A549 (cell line): ENCODE measurements at regions of chr2 and their contacts with region 1.

Region 1: GRCh38 chr2:60581433-60582282 is 28.2 kb upstream of the BCL11A start:
- DNase-seq: peak; percentile 58 to 76
- ATAC-seq: peak; percentile 87 to 95
- H3K4me3 ChIP-seq: peak overlapping the region; percentile 35
- H3K27ac ChIP-seq: peak overlapping the region in 1 of 2 experiments; percentile 65; a peak in 3 of 6 replicates
- H3K4me1 ChIP-seq: no peaks in the 10 kb centered on the region
- CTCF ChIP-seq: peak; percentile 98
- EP300 ChIP-seq: no peak
- POLR2A ChIP-seq: no peak
- RAD21 ChIP-seq: peak; percentile 88 to 98

Region 2: GRCh38 chr2:59025157-59025757 is 1556.4 kb before region 1 on chr2:
- CTCF ChIA-PET with region 1: interaction called, 10 read pairs
- POLR2A ChIA-PET with region 1: no interaction called
- DNase-seq: peak in 1 of 2 experiments; percentile 34
- ATAC-seq: peak; percentile 56 to 90; a peak in 3 of 6 replicates
- H3K4me3 ChIP-seq: no peak overlapping the region
- H3K27ac ChIP-seq: no peak overlapping the region
- H3K4me1 ChIP-seq: no peaks in the 10 kb centered on the region
- CTCF ChIP-seq: peak; percentile 65
- EP300 ChIP-seq: no peak
- POLR2A ChIP-seq: no peak
- RAD21 ChIP-seq: peak; percentile 48 to 68; a peak in 4 of 5 replicates

Region 3: GRCh38 chr2:60406192-60406591 is 175.5 kb before region 1 on chr2:
- CTCF ChIA-PET with region 1: no interaction called
- POLR2A ChIA-PET with region 1: no interaction called
- DNase-seq: no peak
- ATAC-seq: no peak
- H3K4me3 ChIP-seq: no peak overlapping the region
- H3K27ac ChIP-seq: no peak overlapping the region
- H3K4me1 ChIP-seq: no peaks in the 10 kb centered on the region
- CTCF ChIP-seq: no peak
- EP300 ChIP-seq: no peak
- POLR2A ChIP-seq: no peak
- RAD21 ChIP-seq: no peak

Region 4: GRCh38 chr2:60550178-60550983 is 31.3 kb before region 1 on chr2:
- CTCF ChIA-PET with region 1: interaction called, 12 read pairs
- POLR2A ChIA-PET with region 1: no interaction called
- DNase-seq: peak; percentile 65 to 75
- ATAC-seq: peak; percentile 45 to 74
- H3K4me3 ChIP-seq: peak overlapping the region; percentile 63
- H3K27ac ChIP-seq: no peak overlapping the region
- H3K4me1 ChIP-seq: peaks cover 32% of the 10 kb centered on the region
- CTCF ChIP-seq: peak; percentile 82
- EP300 ChIP-seq: no peak
- POLR2A ChIP-seq: no peak
- RAD21 ChIP-seq: peak; percentile 91 to 94

Region 5: DNA sequence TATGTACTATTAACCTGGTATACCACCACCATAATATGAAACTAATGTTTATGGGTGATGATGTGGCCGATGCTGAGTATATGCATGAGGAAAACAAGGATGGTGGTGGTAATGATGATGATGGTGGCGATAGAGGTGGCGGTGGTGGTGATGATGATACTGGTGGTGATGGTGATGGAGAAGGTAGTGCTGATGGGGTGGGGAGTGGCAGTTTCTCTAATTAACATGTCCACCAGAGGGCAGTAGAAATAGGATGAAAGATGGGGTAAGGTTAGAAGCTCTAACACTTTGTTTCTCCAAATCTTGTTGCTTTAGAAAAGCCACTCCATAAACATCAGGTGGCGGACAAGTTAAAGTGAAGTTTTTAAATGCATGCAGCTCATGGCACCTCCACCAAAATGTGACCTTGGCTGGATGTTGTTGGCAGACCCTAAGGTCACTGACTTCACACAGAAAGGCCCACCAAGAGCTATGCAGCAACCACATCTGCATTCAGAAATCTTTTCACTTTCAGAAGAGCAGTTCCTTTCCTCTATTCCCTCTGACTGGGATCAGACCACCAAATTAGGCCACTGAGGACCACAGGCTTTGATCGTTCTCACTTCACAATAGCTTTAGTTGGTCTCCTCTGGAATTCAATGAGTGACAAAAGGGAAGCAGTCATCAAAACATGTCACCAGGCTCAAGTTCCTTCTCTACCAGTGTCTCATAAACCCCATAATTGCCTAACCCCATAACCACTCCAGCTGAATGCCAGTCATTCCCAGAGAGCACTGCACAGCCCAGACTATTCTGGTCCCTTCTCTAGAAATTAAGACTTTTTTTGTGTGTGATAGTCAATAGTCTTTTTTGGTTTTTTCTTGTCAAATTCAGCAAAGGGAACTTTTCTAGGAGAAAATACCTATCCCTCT is 20.7 kb before region 1 on chr2:
- CTCF ChIA-PET with region 1: interaction called, 69 read pairs
- POLR2A ChIA-PET with region 1: no interaction called
- DNase-seq: peak in 1 of 2 experiments; percentile 31
- ATAC-seq: peak; percentile 72 to 92
- H3K4me3 ChIP-seq: no peak overlapping the region
- H3K27ac ChIP-seq: no peak overlapping the region
- H3K4me1 ChIP-seq: 0 out of 3 replicates have a peak, but pooled peaks cover 7% of the 10 kb centered on the region
- CTCF ChIP-seq: peak; percentile 64
- EP300 ChIP-seq: no peak
- POLR2A ChIP-seq: no peak
- RAD21 ChIP-seq: 0 out of 5 replicates have a peak, but pooled peaks have one; percentile 18 to 28

Region 6: DNA sequence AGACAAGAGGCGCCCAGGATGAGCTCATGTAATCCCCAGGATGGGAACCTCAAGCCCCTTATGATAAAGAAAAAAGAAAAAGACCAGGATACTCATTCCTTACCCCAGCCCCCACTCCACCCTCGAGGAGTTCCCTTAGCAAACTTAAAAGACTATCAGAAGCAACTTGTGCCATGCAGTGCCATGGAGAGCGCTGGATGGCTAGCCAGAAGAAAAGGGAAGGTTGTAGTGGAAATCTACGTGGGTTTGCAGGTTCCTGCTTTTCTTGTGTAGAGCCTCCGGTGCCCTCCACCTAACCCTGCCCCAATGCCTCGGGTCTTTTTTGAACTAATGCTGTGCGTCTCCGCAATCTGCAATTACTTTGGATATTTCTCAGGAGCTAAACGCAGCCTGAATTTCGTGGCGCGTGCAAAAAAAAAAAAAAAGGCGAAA is 12.0 kb before region 1 on chr2:
- CTCF ChIA-PET with region 1: interaction called, 69 read pairs
- POLR2A ChIA-PET with region 1: no interaction called
- DNase-seq: no peak
- ATAC-seq: peak in 1 of 2 experiments; percentile 26; a peak in 3 of 6 replicates
- H3K4me3 ChIP-seq: no peak overlapping the region; the same call in 2 of the 3 replicates
- H3K27ac ChIP-seq: no peak overlapping the region
- H3K4me1 ChIP-seq: no peaks in the 10 kb centered on the region
- CTCF ChIP-seq: no peak
- EP300 ChIP-seq: no peak
- POLR2A ChIP-seq: no peak
- RAD21 ChIP-seq: no peak

Region 7: GRCh38 chr2:60597346-60597745 is 15.7 kb after region 1 on chr2:
- CTCF ChIA-PET with region 1: interaction called, 28 read pairs
- POLR2A ChIA-PET with region 1: no interaction called
- DNase-seq: peak in 1 of 2 experiments; percentile 19
- ATAC-seq: no peak; a peak in 2 of 6 replicates
- H3K4me3 ChIP-seq: no peak overlapping the region
- H3K27ac ChIP-seq: no peak overlapping the region
- H3K4me1 ChIP-seq: no peaks in the 10 kb centered on the region
- CTCF ChIP-seq: no peak
- EP300 ChIP-seq: no peak
- POLR2A ChIP-seq: no peak
- RAD21 ChIP-seq: no peak

Region 8: GRCh38 chr2:60674524-60675165 is 93.0 kb after region 1 on chr2:
- CTCF ChIA-PET with region 1: interaction called, 10 read pairs
- POLR2A ChIA-PET with region 1: no interaction called
- DNase-seq: peak; percentile 82 to 85
- ATAC-seq: peak; percentile 98 to 100
- H3K4me3 ChIP-seq: no peak overlapping the region
- H3K27ac ChIP-seq: no peak overlapping the region
- H3K4me1 ChIP-seq: no peaks in the 10 kb centered on the region
- CTCF ChIP-seq: peak; percentile 92
- EP300 ChIP-seq: no peak
- POLR2A ChIP-seq: no peak
- RAD21 ChIP-seq: peak; percentile 72 to 80

Region 9: GRCh38 chr2:61117534-61117933 is 535.9 kb after region 1 on chr2:
- CTCF ChIA-PET with region 1: no interaction called
- POLR2A ChIA-PET with region 1: no interaction called
- DNase-seq: no peak
- ATAC-seq: no peak
- H3K4me3 ChIP-seq: no peak overlapping the region
- H3K27ac ChIP-seq: no peak overlapping the region
- H3K4me1 ChIP-seq: no peaks in the 10 kb centered on the region
- CTCF ChIP-seq: no peak
- EP300 ChIP-seq: no peak
- POLR2A ChIP-seq: no peak
- RAD21 ChIP-seq: no peak